Activated CD4-positive, alpha-beta memory T cell treated with anti-CD3 and anti-CD28 coated beads for 36 hours (primary cell): ENCODE measurements at regions of chr4 and their contacts with region 1.

Region 1: GRCh38 chr4:53432528-53433424 is 55.3 kb downstream of the FIP1L1 start:
- DNase-seq: no peak
- H3K4me3 Mint-ChIP-seq: no peak overlapping the region
- H3K27ac Mint-ChIP-seq: no peak overlapping the region
- H3K4me1 Mint-ChIP-seq: peaks cover 23% of the 10 kb centered on the region
- H3K27me3 Mint-ChIP-seq: no peaks in the 10 kb centered on the region

Region 2: GRCh38 chr4:53377319-53378170 is 55.2 kb before region 1 on chr4 and contains the start of gene FIP1L1:
- CTCF ChIA-PET with region 1: no interaction called
- POLR2A ChIA-PET with region 1: no interaction called
- intact Hi-C with region 1: loop called (anchors 5 kb)
- DNase-seq: peak; percentile 97
- H3K4me3 Mint-ChIP-seq: peak within 1 kb of the TSS; percentile 99
- H3K27ac Mint-ChIP-seq: peak within 1 kb of the TSS; percentile 98
- H3K4me1 Mint-ChIP-seq: peaks cover 32% of the 10 kb centered on the region
- H3K27me3 Mint-ChIP-seq: peaks cover 7% of the 10 kb centered on the region
- total RNA-seq, gene FIP1L1: 65.0 to 72.7 TPM